Common myeloid progenitor, CD34-positive (primary cell): ENCODE measurements at regions of chr11 and their contacts with region 1.

Region 1: GRCh38 chr11:95150946-95151684 is 61.5 kb downstream of the ENDOD1 start:
- DNase-seq: peak; percentile 95 to 97 (median 96)
- H3K4me3 ChIP-seq: peak overlapping the region; percentile 46 to 80 (median 64)
- H3K27ac ChIP-seq: peak overlapping the region; percentile 54 to 85
- H3K4me1 ChIP-seq: peaks cover 19 to 82% (median 62%) of the 10 kb centered on the region in 4 experiments
- H3K27me3 ChIP-seq: no peaks in the 10 kb centered on the region

Region 2: DNA sequence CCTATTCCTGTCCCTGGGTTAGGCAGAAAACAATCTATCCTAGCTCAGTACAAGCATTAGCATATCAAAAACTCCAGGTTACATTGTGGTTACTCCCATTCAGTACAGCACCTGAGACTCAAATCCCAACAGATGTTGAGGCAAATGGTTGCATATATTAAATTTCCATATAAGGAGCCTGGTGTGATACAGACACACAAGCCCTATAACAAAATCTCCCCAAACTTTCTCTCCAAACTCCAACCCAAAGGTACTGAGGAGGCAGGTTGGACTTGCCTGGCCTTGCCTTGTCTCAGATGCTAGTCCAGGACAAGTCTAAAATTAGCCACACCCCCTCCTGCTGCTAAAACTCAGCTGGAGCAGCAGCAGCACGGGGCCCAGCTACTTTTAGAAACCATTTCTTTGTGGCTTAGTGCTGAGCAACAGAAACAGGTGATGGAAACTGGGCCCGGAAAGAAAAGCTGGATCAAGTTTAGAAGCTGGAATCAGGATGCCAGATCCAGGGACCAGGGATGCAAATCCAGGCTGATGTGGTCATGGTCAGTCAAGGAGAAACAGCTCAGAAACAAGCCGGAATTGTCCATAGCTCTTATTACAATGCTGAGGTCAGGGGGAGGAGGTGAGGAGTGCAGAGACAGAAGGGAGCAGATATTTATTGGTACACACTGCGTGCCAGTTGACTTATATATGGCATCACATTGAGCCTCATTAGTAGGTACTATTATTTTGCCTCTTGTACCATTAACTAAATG is 456.6 kb before region 1 on chr11:
- CTCF ChIA-PET with region 1: no interaction called
- POLR2A ChIA-PET with region 1: no interaction called
- DNase-seq: no peak
- H3K4me3 ChIP-seq: no peak overlapping the region
- H3K27ac ChIP-seq: no peak overlapping the region
- H3K4me1 ChIP-seq: no peaks in the 10 kb centered on the region
- H3K27me3 ChIP-seq: no peaks in the 10 kb centered on the region

Region 3: DNA sequence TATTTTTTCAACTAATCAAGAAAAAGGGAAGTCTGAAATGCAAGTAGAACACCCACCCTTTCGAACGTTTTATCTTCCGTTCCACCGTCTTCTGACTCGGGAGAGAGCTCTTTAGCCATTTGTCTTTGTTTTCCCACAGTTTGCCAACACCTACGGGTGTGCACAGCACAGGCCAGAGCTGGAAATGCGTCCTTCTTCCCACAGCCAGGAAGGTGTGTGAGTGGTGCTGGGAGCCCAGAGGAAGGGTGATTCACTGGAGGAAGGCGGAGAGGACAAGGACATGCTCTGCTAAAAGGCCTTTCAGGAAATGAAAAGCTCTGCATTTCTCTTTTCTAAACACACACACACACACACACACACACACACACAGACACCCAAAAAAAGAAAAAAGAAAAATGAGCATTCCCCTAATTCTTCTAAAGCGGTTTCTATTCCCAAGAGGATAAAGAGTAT is 42.9 kb before region 1 on chr11:
- CTCF ChIA-PET with region 1: interaction called, 12 read pairs
- POLR2A ChIA-PET with region 1: interaction called, 3 read pairs
- DNase-seq: peak in 2 of 3 donors; percentile 41 to 46
- H3K4me3 ChIP-seq: peak overlapping the region in 4 of 7 experiments; percentile 20 to 68 (median 40)
- H3K27ac ChIP-seq: peak overlapping the region in 1 of 2 experiments; percentile 67
- H3K4me1 ChIP-seq: peaks cover 6 to 21% (median 14%) of the 10 kb centered on the region in 4 experiments
- H3K27me3 ChIP-seq: no peaks in the 10 kb centered on the region

Region 4: DNA sequence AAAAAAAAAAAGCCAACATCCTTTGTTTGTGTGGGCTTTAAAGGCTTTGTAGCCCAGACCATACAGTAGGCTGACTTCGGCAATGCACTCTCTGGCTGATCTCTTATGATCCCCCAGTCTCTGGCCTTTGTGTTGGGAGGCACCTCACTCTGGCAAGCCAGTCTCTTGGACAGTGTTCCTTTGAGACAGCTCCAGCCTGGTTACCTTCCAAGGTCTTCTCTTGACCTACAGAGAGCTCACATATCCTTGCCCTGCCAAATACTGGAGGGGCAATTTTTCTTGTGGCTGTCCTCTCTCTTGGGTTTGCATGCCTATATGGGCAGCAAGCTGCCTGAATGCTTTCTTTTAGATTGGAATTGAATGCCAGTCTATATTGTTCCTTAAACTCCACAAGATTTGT is 10.1 kb after region 1 on chr11:
- CTCF ChIA-PET with region 1: interaction called, 79 read pairs
- POLR2A ChIA-PET with region 1: no interaction called
- DNase-seq: no peak
- H3K4me3 ChIP-seq: no peak overlapping the region
- H3K27ac ChIP-seq: no peak overlapping the region
- H3K4me1 ChIP-seq: peaks cover 10 to 31% (median 22%) of the 10 kb centered on the region in 4 experiments
- H3K27me3 ChIP-seq: no peaks in the 10 kb centered on the region

Region 5: GRCh38 chr11:95231127-95231880 is 80.2 kb after region 1 on chr11 and contains the start of gene SESN3:
- CTCF ChIA-PET with region 1: interaction called, 10 read pairs
- POLR2A ChIA-PET with region 1: interaction called, 3 read pairs
- DNase-seq: peak; percentile 100
- H3K4me3 ChIP-seq: peak within 1 kb of the TSS; percentile 85 to 100 (median 99)
- H3K27ac ChIP-seq: peak within 1 kb of the TSS; percentile 77 to 92
- H3K4me1 ChIP-seq: peaks cover 13 to 45% (median 32%) of the 10 kb centered on the region in 4 experiments
- H3K27me3 ChIP-seq: no peaks in the 10 kb centered on the region

Region 6: GRCh38 chr11:95330302-95330701 is 179.2 kb after region 1 on chr11:
- CTCF ChIA-PET with region 1: no interaction called
- POLR2A ChIA-PET with region 1: no interaction called
- DNase-seq: no peak
- H3K4me3 ChIP-seq: no peak overlapping the region
- H3K27ac ChIP-seq: no peak overlapping the region
- H3K4me1 ChIP-seq: peaks cover 0 to 3% (median 0%) of the 10 kb centered on the region in 4 experiments
- H3K27me3 ChIP-seq: no peaks in the 10 kb centered on the region

Region 7: GRCh38 chr11:95736355-95736754 is 585.2 kb after region 1 on chr11:
- CTCF ChIA-PET with region 1: interaction called, 13 read pairs
- POLR2A ChIA-PET with region 1: interaction called, 3 read pairs
- DNase-seq: peak in 2 of 3 donors; percentile 30 to 40
- H3K4me3 ChIP-seq: no peak overlapping the region
- H3K27ac ChIP-seq: peak overlapping the region in 1 of 2 experiments; percentile 55
- H3K4me1 ChIP-seq: peaks cover 6 to 44% (median 26%) of the 10 kb centered on the region in 4 experiments
- H3K27me3 ChIP-seq: no peaks in the 10 kb centered on the region

Region 8: GRCh38 chr11:95790123-95790932 is 639.2 kb after region 1 on chr11 and contains the start of gene CEP57:
- CTCF ChIA-PET with region 1: interaction called, 21 read pairs
- POLR2A ChIA-PET with region 1: interaction called, 5 read pairs
- DNase-seq: peak; percentile 97 to 98 (median 98)
- H3K4me3 ChIP-seq: peak within 1 kb of the TSS; percentile 80 to 98 (median 93)
- H3K27ac ChIP-seq: peak within 1 kb of the TSS; percentile 99 to 100
- H3K4me1 ChIP-seq: peaks cover 15 to 30% (median 22%) of the 10 kb centered on the region in 4 experiments
- H3K27me3 ChIP-seq: no peaks in the 10 kb centered on the region